ENCODE measurements at regions of chr5 and their contacts with region 1.

Region 1: GRCh38 chr5:119411935-119412602 is 40.2 kb upstream of the HSD17B4 start:
- DNase-seq: peak; percentile 52
- H3K4me3 ChIP-seq: peak overlapping the region; percentile 60
- H3K27ac ChIP-seq: peak overlapping the region; percentile 71
- H3K27me3 ChIP-seq: no peaks in the 10 kb centered on the region
- CTCF ChIP-seq: peak; percentile 94

Region 2: GRCh38 chr5:118956727-118957126 is 455.3 kb before region 1 on chr5:
- CTCF ChIA-PET with region 1: interaction called, 18 read pairs
- POLR2A ChIA-PET with region 1: no interaction called
- DNase-seq: no peak
- H3K4me3 ChIP-seq: no peak overlapping the region
- H3K27ac ChIP-seq: no peak overlapping the region
- H3K27me3 ChIP-seq: no peaks in the 10 kb centered on the region
- CTCF ChIP-seq: peak; percentile 45

Region 3: DNA sequence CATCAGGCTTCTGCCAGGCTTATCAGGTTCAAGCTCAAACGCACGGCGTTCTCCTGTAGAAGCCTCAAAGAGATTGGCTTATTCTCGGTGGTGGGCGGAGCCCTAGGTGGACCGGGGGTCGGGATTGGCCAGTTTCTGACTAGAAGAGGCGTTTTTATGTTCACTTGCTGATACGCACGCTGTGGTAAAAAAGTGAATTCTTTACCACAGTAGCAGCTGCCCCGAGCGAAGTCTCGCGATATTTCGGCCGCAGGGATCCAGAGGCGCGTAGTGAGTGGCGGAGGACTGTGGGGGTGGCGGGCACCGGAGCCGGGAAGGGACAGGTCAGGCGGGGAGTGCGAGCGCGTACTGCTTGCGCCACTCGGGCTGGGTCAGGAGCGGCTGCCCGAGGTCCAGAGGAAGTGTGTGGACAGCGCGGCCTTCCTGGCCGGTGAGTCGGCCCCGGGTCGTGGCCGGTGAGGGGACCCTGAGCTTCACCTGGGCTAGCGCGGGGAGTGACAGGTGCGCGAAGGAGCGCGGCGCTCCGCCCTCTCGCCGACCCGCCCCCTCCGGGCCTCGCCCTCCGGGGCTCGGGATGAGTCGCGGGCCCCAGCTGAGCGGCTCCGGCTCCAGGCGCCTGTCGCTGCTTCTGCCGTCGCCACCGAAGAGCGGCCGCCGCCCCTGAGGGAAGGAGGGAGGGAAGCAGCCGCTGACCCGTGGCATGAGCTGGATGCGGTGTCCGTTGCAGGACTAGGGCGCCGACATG is 341.1 kb before region 1 on chr5 and contains the start of gene DMXL1:
- CTCF ChIA-PET with region 1: interaction called, 11 read pairs
- POLR2A ChIA-PET with region 1: no interaction called
- DNase-seq: peak; percentile 99
- H3K4me3 ChIP-seq: peak within 1 kb of the TSS; percentile 97
- H3K27ac ChIP-seq: peak within 1 kb of the TSS; percentile 92
- H3K27me3 ChIP-seq: no peaks in the 10 kb centered on the region
- CTCF ChIP-seq: no peak
- polyA plus RNA-seq, gene DMXL1: 14.7 and 22.2 TPM in 2 replicates

Region 4: GRCh38 chr5:119229950-119230349 is 182.1 kb before region 1 on chr5:
- CTCF ChIA-PET with region 1: interaction called, 10 read pairs
- POLR2A ChIA-PET with region 1: no interaction called
- DNase-seq: no peak
- H3K4me3 ChIP-seq: no peak overlapping the region
- H3K27ac ChIP-seq: no peak overlapping the region
- H3K27me3 ChIP-seq: no peaks in the 10 kb centered on the region
- CTCF ChIP-seq: no peak

Region 5: DNA sequence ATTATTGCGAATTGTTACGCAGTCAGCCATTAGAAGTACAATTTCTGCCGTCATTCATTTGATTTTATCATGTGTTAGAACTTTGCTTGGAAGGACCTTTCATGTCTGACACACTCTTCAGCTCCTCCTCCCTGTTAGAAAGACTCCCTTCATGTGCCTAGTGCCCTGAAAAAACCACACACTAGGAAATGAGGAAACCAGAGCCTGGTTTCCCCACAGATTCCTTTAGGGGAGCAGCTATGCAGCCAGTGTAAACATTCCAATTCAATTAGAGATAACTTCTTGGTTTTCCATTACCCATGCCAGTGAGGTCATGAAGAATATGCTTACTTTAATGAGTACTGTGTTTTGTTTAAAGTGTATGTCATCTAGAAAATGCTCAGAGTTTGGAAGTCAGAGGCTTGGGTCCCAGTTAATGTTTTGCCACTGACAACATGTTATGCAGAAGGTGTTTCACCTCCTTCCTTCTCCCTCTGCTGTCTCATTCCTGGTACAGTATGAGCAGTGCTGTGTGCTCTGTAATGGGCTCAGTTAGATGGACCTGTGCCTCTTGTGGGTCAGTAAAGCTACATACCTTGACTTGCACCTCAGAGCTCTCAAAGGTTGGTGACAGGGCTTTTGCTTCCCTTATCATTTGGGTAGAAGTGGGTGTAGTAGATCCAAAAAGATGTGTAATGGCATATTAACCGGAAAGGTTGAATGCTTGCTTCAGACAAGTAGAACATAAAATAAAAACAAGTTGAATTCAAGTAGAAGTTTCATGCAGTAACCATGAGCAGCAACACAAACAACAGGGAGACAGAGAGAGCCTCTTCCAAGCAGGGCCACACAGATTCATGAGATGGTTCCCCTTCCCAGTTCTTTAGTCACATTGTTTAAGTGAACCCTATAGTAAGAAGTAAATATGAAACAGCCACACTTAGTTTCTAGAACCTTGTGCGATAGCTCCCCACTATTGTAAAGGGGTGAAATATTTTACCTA is 108.9 kb before region 1 on chr5:
- CTCF ChIA-PET with region 1: interaction called, 15 read pairs
- POLR2A ChIA-PET with region 1: no interaction called
- DNase-seq: peak; percentile 96
- H3K4me3 ChIP-seq: no peak overlapping the region
- H3K27ac ChIP-seq: peak overlapping the region; percentile 87
- H3K27me3 ChIP-seq: no peaks in the 10 kb centered on the region
- CTCF ChIP-seq: peak; percentile 25; the same call in 1 of the 2 replicates

Region 6: GRCh38 chr5:119397518-119398380 is 14.3 kb before region 1 on chr5:
- CTCF ChIA-PET with region 1: interaction called, 24 read pairs
- POLR2A ChIA-PET with region 1: no interaction called
- DNase-seq: no peak
- H3K4me3 ChIP-seq: no peak overlapping the region
- H3K27ac ChIP-seq: peak overlapping the region; percentile 82
- H3K27me3 ChIP-seq: no peaks in the 10 kb centered on the region
- CTCF ChIP-seq: no peak

Measured in AG04450 (cell line).